ENCODE measurements at regions of chr10 and their contacts with region 1.

Region 1: GRCh38 chr10:5446390-5446926 is 34.1 kb downstream of the NET1 start:
- DNase-seq: peak; percentile 83
- ATAC-seq: peak; percentile 88
- H3K4me3 ChIP-seq: peak overlapping the region; percentile 92
- H3K27ac ChIP-seq: peak overlapping the region; percentile 37; the same call in 1 of the 2 replicates
- H3K4me1 ChIP-seq: peaks cover 8% of the 10 kb centered on the region; the same call in 1 of the 2 replicates
- H3K27me3 ChIP-seq: no peaks in the 10 kb centered on the region
- CTCF ChIP-seq: no peak

Region 2: GRCh38 chr10:5147981-5148677 is 298.3 kb before region 1 on chr10:
- CTCF ChIA-PET with region 1: no interaction called
- POLR2A ChIA-PET with region 1: no interaction called
- intact Hi-C with region 1: no loop called
- DNase-seq: no peak
- ATAC-seq: no peak
- H3K4me3 ChIP-seq: no peak overlapping the region
- H3K27ac ChIP-seq: no peak overlapping the region
- H3K4me1 ChIP-seq: no peaks in the 10 kb centered on the region
- H3K27me3 ChIP-seq: no peaks in the 10 kb centered on the region
- CTCF ChIP-seq: no peak

Region 3: GRCh38 chr10:5583525-5584175 is 137.2 kb after region 1 on chr10:
- CTCF ChIA-PET with region 1: no interaction called
- POLR2A ChIA-PET with region 1: interaction called, 10 read pairs
- intact Hi-C with region 1: no loop called
- DNase-seq: peak; percentile 84
- ATAC-seq: peak; percentile 50
- H3K4me3 ChIP-seq: no peak overlapping the region
- H3K27ac ChIP-seq: peak overlapping the region; percentile 100
- H3K4me1 ChIP-seq: peaks cover 36% of the 10 kb centered on the region
- H3K27me3 ChIP-seq: no peaks in the 10 kb centered on the region
- CTCF ChIP-seq: no peak

Region 4: GRCh38 chr10:5614155-5614721 is 167.8 kb after region 1 on chr10:
- CTCF ChIA-PET with region 1: no interaction called
- POLR2A ChIA-PET with region 1: interaction called, 11 read pairs
- intact Hi-C with region 1: loop called (anchors 5 kb)
- DNase-seq: peak; percentile 38
- ATAC-seq: no peak
- H3K4me3 ChIP-seq: no peak overlapping the region
- H3K27ac ChIP-seq: peak overlapping the region; percentile 91
- H3K4me1 ChIP-seq: peaks cover 61% of the 10 kb centered on the region
- H3K27me3 ChIP-seq: no peaks in the 10 kb centered on the region
- CTCF ChIP-seq: no peak

Region 5: DNA sequence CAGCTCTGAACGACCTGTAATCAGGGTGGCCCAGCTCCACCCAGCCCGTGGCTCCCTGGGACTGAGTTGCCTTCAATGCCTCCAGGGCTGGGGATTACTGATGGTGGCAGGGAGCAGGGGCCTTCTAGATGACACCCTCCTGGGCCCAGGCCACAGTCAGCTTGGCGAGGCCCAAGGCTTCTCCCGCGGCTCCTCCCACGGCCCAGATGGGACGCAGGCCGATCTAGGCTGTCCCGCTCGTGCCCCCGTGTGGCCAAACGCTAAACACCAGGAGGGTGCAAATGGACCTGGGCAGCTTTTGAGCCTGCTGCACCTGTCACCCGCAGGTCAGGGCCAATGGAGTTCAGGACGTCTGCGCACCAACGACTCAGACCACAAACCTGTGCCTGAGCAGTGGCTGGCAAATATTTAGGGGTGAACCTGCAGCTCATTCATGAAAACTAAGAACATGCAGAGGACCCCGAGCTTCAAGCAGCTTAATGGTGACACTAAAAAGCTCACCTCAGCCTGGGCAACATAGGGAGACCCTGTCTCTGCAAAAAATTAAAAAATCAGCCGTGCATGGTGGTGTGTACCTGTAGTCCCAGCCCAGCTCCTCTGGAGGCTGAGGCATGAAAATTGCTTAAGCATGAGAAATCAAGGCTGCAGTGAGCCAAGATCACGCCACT is 176.8 kb after region 1 on chr10:
- CTCF ChIA-PET with region 1: interaction called, 4 read pairs
- POLR2A ChIA-PET with region 1: no interaction called
- intact Hi-C with region 1: loop called (anchors 1 kb)
- DNase-seq: peak; percentile 81
- ATAC-seq: peak; percentile 90
- H3K4me3 ChIP-seq: no peak overlapping the region
- H3K27ac ChIP-seq: peak overlapping the region; percentile 76
- H3K4me1 ChIP-seq: peaks cover 11% of the 10 kb centered on the region; the same call in 1 of the 2 replicates
- H3K27me3 ChIP-seq: no peaks in the 10 kb centered on the region
- CTCF ChIP-seq: peak; percentile 74

Measured in PC-3 (cell line).